ENCODE measurements at regions of chr1 and their contacts with region 1.

Region 1: DNA sequence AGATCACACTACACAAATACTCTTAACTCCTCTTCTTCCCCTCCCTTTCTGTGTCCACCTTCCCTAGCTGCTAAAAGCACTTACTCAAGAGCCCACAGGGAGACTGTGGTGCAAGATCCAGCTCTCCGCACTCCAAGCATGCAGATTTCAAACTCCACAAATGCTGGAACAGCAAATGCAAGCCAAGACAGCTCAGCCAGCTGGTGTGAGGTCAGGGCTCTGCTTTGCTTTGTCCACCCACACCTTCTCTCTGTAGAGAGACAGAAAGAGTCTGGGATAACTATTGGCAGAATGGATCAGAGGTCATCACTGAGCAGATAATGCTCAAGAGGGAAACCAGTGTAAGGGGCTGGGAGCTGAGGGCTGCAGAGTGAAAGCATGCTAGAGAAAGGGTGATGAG is 45.2 kb upstream of the DPT start:
- DNase-seq: peak; percentile 12
- H3K4me3 Mint-ChIP-seq: no peak overlapping the region
- H3K27ac Mint-ChIP-seq: no peak overlapping the region
- H3K4me1 Mint-ChIP-seq: peaks cover 4% of the 10 kb centered on the region
- H3K27me3 Mint-ChIP-seq: no peaks in the 10 kb centered on the region
- CTCF ChIP-seq: no peak

Region 2: DNA sequence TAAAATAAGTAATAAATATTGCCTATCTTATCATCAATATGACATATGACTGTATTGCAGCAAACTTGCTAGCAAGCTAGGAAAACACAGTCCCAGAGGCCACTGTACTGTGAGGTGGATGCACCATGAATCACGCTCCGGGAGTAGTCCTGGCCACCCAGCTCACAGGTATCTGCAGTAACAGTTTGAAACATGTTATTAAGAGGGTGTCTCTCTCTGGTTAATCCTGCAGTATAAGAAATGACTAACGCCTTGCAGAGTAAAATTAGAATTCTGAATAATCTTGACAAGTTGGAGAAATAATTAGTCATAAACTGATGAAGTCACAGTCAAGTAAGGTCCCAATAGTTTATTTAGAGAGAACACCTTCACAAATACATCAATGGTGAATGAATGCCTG is 11.2 kb before region 1 on chr1:
- CTCF ChIA-PET with region 1: interaction called, 5 read pairs
- POLR2A ChIA-PET with region 1: interaction called, 10 read pairs
- intact Hi-C with region 1: no loop called
- DNase-seq: peak; percentile 35
- H3K4me3 Mint-ChIP-seq: no peak overlapping the region
- H3K27ac Mint-ChIP-seq: no peak overlapping the region
- H3K4me1 Mint-ChIP-seq: peaks cover 22% of the 10 kb centered on the region
- H3K27me3 Mint-ChIP-seq: no peaks in the 10 kb centered on the region
- CTCF ChIP-seq: no peak